ENCODE measurements at regions of chr6 and their contacts with region 1.

Region 1: DNA sequence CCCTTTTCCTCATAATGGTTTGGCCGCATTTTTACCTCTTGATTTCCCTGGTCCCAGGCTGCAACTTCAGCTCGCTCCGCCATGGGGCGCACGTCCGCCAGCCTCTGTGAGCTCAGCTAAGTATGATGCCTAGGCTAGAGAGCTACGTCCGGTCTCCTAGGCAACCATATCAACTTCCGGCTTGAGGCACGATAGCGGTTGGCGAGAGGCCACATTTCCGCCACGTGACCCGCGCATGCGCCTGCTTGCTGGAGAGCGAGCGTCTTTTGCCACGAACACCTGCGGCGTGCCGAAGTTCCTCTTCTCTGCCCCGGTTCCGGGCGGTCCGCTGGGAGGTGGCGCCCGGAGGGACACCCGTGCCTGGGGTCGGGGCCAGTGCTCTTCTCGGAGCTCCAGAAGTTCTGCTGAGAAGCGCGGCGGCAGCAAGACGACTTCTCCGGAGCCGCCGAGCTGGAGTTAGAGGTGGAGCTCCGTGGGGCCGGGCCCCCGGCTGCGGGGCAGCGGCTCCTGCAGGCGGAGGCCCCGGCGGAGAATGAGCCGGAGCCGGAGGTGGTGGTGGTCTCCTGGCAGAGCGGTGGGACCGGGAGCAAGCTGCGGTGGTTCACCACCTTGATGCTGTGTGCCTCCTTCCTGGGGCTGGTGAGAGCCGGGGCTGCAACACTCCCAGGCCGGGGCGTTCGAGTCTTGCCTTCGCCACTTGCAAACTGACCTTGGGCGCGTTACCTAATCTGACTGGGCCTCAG is 172.0 kb downstream of the SLC16A10 start:
- DNase-seq: peak; percentile 99 to 100
- H3K4me3 ChIP-seq: peak overlapping the region; percentile 70
- CTCF ChIP-seq: peak in 1 of 3 donors; percentile 99
- POLR2A ChIP-seq: no peak

Region 2: DNA sequence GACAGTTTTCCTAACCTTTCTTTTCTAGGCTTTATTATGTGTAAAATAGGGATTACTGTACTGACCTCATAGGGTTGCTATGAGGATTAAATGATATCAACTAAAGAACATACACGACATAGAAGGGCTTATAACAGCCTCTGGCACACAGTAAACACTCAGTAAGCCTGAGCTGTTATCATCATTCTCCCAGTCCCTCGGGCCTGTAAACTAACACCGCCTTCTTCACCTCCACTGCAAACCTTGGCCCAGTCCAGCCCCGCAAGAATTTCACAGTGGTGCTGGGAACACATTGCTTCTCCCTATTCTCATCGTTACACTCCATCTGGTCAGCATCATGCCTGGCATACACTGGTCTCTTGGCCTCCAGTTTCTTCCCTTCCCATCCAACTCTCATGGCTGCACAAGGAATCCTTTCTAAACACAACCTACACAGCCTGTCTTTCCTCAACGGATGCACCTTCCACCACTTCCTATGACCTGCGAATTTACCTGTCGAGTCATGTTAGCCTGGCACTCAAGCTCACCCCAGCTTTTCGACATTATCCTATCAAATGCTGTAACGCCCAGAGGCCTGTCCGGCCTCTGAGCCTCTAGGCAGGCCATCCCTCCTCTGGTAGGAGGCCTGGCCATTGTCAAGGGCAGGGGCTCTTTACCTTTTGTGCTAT is 521.9 kb after region 1 on chr6:
- intact Hi-C with region 1: no loop called
- DNase-seq: no peak
- H3K4me3 ChIP-seq: no peak overlapping the region
- CTCF ChIP-seq: no peak
- POLR2A ChIP-seq: no peak

Region 3: GRCh38 chr6:112054555-112055160 is 795.4 kb after region 1 on chr6:
- intact Hi-C with region 1: loop called (anchors 5 kb)
- DNase-seq: no peak
- H3K4me3 ChIP-seq: no peak overlapping the region
- CTCF ChIP-seq: no peak
- POLR2A ChIP-seq: no peak

Measured in lower leg skin (tissue), 4 donors.